Activated CD4-positive, alpha-beta T cell treated with anti-CD3 and anti-CD28 coated beads, Interleukin-2, amount 10 ng/mL, durations not matched to agents 24 days and 14 days (primary cell): ENCODE measurements at regions of chr13 and their contacts with region 1.

Region 1: GRCh38 chr13:92640936-92641335 is 585.7 kb upstream of the GPC6 start:
- DNase-seq: no peak
- H3K4me3 Mint-ChIP-seq: no peak overlapping the region
- H3K27ac Mint-ChIP-seq: no peak overlapping the region
- H3K4me1 Mint-ChIP-seq: no peaks in the 10 kb centered on the region
- H3K27me3 Mint-ChIP-seq: no peaks in the 10 kb centered on the region

Region 2: DNA sequence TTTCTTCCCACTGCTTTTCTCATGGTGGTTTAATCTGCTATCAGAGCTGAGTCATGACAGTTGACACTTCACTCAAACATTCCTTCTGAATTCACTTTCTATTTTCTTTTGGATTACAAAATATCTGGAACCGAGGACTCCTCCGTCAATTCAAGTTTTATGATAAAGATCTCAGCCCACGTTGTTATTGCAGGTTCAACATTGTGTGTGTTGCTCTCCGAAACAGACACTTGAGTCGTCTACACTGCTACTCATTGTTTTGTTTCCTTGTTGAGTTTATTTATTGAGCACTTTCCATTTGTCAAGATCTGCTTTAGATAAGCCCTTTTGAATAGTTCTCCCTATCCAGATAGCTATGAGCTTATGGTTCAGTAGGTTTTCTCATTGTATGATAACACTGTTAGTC is 50.4 kb before region 1 on chr13:
- intact Hi-C with region 1: loop called (anchors 1 kb)
- DNase-seq: no peak
- H3K4me3 Mint-ChIP-seq: no peak overlapping the region
- H3K27ac Mint-ChIP-seq: no peak overlapping the region
- H3K4me1 Mint-ChIP-seq: no peaks in the 10 kb centered on the region
- H3K27me3 Mint-ChIP-seq: no peaks in the 10 kb centered on the region